HEK293 (cell line): ENCODE measurements at regions of chr18 and their contacts with region 1.

Region 1: DNA sequence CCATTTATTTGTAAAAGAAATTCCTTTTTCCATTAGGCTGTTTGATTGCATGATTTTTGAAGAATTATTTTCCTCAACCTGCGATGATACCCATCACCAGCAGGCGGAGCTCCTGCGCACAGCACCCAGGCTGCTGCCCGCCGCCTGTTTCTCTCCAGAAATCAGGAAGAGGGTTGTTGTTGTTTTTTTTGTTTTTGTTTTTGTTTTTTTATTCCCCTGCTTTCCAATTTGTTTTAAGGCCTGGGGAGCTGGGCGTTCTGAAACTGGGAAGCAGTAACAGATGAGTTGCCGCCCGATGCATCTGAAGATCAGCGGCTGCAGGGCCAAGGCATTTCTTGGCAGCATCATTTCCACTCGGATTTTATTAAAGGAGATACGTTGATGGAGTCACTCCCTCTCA is 132.1 kb downstream of the MBP start:
- H3K4me3 ChIP-seq: no peak overlapping the region
- H3K27ac ChIP-seq: no peak overlapping the region
- H3K4me1 ChIP-seq: peaks cover 3% of the 10 kb centered on the region
- CTCF ChIP-seq: peak; percentile 72

Region 2: GRCh38 chr18:76982841-76983587 is 17.5 kb before region 1 on chr18:
- CTCF ChIA-PET with region 1: interaction called, 30 read pairs
- POLR2A ChIA-PET with region 1: no interaction called
- H3K4me3 ChIP-seq: no peak overlapping the region
- H3K27ac ChIP-seq: no peak overlapping the region
- H3K4me1 ChIP-seq: no peaks in the 10 kb centered on the region
- CTCF ChIP-seq: peak; percentile 88

Region 3: DNA sequence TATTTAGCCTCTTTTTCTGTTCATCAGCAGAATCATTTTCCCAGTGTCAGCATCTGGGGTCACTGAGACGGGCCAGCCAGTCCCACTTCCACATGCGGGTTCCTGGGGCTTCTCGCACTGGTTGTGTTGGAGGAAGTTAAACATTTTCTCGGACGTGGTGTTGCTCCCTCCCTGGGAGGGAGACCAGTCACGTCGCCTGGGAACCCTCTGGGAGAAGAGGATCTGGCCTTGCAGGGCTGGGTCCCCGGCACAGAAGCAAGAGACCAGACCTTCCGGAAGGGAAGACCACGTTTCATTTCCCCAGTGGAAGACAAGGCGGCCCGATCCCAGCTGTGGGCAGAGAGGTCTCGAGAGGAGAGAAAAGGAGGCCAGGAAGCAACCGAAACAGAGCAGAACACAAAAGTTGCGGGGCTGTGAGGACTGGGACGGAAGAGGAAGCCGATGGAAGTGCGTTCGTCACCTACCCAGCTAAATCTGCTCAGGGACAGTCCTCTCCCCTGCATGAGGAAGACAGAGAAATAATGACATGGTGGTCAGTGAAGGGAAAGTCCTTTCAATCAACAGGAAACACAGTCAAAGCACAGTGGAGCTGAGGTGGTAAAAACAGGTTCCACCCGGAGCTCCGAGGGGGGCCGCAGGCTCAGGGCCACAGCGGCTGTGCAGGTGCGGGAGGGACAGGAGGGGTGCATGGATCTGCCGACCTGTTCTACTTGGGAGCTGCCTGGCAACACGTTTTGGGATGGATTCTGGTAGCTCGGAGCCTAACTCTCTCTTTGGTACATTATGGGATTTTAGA is 12.3 kb before region 1 on chr18:
- CTCF ChIA-PET with region 1: interaction called, 30 read pairs
- POLR2A ChIA-PET with region 1: no interaction called
- H3K4me3 ChIP-seq: no peak overlapping the region
- H3K27ac ChIP-seq: no peak overlapping the region
- H3K4me1 ChIP-seq: no peaks in the 10 kb centered on the region
- CTCF ChIP-seq: no peak

Region 4: DNA sequence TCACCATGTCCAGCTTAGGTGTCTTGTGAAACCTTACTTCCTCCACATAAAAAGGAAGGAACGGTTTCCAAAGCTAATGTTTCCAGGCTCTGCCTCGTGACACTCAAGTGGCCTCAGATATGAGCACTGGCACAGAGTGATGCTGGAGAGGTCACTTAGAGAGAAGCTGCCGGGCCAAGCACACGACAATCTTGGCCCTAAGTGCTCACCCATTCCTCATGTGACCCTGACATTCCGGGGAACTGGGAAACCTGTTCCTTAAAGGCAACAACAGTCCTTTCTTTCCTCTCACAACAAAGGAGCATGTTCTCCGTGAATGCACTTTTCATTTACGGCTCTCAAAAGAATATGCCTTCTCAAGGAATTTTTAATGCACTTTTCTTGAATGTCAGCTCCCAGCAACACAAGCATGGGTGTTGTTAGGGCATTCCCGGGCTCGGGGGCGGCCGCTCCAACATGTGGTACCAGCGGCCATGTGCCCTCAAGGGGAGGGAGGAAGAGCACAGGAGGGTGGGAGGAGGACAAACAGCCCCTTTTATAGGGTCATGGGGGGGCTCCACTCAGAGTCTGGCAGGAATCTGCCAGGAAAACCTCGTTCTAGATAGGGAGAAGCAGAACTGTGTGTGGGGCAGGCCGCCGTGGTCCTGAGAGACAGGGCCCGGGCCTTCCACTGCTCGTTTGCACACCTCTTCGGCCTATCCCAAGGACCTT is 13.4 kb after region 1 on chr18:
- CTCF ChIA-PET with region 1: interaction called, 40 read pairs
- POLR2A ChIA-PET with region 1: no interaction called
- H3K4me3 ChIP-seq: no peak overlapping the region
- H3K27ac ChIP-seq: no peak overlapping the region
- H3K4me1 ChIP-seq: no peaks in the 10 kb centered on the region
- CTCF ChIP-seq: no peak

Region 5: GRCh38 chr18:77054606-77055428 is 54.3 kb after region 1 on chr18:
- CTCF ChIA-PET with region 1: interaction called, 19 read pairs
- POLR2A ChIA-PET with region 1: no interaction called
- H3K4me3 ChIP-seq: peak overlapping the region; percentile 21
- H3K27ac ChIP-seq: peak overlapping the region; percentile 69
- H3K4me1 ChIP-seq: peaks cover 25% of the 10 kb centered on the region
- CTCF ChIP-seq: peak; percentile 89

Region 6: DNA sequence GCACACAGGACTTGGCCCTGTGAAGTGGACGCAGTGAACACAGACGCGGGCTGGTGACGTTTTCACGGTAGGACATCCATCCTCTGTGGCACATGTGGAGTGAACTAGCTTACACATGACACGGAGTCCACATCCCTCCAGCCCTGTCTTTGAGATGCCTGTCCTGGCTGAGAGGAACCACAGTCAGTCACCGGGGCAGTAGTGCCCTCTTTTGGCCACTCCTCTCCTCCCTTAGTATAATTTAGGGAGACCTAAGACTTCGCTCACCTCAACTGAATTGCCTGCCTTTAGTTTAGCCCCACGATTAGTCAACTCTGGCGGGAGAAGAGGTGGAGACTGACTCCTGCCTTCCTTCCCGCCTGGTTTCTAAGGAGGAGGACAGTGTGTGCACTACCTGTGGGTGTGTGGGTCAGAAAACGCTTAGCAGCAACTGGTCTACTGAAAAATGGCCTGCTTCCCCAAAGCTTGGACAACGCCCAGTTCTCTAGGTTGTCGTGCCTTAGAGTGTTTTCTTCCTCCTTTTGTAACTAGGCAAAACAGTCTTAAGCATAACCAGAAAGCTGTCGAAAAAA is 61.5 kb after region 1 on chr18:
- CTCF ChIA-PET with region 1: interaction called, 12 read pairs
- POLR2A ChIA-PET with region 1: no interaction called
- H3K4me3 ChIP-seq: no peak overlapping the region
- H3K27ac ChIP-seq: no peak overlapping the region
- H3K4me1 ChIP-seq: peaks cover under 1% of the 10 kb centered on the region; the same call in 1 of the 2 replicates
- CTCF ChIP-seq: no peak

Region 7: DNA sequence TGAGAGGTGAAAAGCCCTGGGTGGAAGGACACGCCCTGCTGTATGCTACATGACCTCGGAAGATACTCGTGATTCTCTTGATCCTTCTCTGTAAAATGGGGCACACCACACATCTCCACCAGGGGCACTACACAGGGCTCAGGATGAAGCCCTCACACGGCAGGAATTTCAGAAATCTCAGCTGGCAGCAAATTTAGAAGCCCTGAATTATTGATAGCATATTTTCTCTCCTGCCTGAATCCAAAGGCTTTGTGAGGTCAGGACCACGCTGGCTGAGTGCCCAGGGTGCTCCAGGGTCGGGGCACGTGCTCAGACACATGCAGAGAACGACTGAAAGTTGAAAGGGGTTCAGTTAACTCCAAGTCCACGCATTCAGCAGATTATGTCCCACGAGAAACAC is 207.0 kb after region 1 on chr18:
- CTCF ChIA-PET with region 1: interaction called, 18 read pairs
- POLR2A ChIA-PET with region 1: no interaction called
- H3K4me3 ChIP-seq: no peak overlapping the region
- H3K27ac ChIP-seq: no peak overlapping the region
- H3K4me1 ChIP-seq: no peaks in the 10 kb centered on the region
- CTCF ChIP-seq: peak; percentile 56; the same call in 1 of the 2 replicates